ENCODE measurements at regions of chr6 and their contacts with region 1.

Region 1: GRCh38 chr6:160766989-160767660 is 65.1 kb downstream of the PLG start:
- DNase-seq: peak; percentile 77
- H3K4me3 ChIP-seq: peak overlapping the region; percentile 59
- H3K27ac ChIP-seq: no peak overlapping the region
- H3K4me1 ChIP-seq: peaks cover 21% of the 10 kb centered on the region
- CTCF ChIP-seq: peak; percentile 82

Region 2: DNA sequence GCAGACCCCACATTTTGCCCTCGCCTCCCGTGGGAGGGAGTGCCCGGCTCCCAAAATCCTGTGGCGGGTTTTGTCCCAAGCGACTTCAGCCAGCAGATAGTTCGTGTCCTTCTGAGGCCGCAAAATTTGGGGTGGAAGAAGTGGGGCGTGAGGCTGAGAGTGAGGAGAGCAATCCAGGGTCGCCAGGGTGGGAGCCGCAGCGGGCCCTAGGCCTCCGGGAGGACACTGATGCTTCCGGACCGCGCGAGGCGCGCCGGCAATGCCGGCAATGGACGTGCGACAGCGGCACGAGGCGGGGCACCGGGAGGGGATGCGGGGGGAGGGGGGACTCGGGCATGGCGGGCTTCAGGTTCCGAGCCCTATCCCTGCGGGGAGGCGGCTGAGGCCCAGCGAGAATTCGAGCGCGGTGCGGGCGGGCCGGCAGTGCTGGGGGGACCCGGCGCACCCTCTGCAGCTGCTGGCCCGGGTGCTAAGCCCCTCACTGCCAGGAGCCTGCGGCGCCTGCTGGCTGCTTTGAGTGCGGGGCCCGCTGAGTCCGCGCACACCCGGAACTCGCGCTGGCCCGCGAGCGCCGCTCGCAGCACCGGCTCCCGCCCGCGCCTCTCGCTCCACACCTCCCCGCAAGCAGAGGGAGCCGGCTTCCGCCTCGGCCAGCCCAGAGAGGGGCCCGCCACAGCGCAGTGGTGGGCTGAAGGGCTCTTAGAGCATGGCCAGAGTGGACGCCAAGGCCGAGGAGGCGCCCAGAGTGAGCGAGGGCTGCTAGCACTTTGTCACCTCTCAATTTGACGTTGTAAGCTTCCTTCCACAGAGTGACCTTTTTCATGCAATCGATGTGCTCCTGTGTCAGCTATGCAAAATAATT is 246.9 kb before region 1 on chr6:
- CTCF ChIA-PET with region 1: no interaction called
- POLR2A ChIA-PET with region 1: no interaction called
- intact Hi-C with region 1: loop called (anchors 5 kb)
- DNase-seq: peak; percentile 30
- H3K4me3 ChIP-seq: no peak overlapping the region
- H3K27ac ChIP-seq: no peak overlapping the region
- H3K4me1 ChIP-seq: no peaks in the 10 kb centered on the region
- CTCF ChIP-seq: peak; percentile 57

Region 3: DNA sequence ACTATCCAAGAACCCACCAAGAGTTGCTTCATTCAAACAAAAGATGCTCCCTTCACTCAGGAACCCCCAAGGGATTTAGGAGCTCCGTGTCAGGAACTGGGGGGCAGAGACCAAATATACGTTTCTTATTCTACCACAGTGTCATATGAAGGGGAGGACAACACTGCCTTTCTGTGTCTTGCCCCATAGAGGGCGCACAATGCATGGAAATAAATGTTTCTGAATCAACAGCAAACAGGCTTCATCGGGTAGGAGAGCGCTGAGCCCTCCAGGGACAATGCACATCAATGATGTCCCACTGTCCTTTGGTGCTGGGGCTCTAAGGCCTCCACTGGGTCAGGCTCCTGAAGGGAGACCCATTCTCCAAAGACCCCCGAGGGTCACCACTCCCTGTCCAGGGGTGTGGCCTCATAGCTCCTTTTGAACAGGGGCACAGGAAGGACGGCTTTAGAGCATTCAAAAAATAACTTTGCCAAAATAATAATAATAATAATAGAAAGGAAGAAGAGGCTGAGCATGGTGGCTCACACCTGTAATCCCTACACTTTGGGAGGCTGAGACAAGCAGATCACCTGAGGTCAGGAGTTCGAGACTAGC is 34.0 kb before region 1 on chr6:
- CTCF ChIA-PET with region 1: interaction called, 3 read pairs
- POLR2A ChIA-PET with region 1: interaction called, 3 read pairs
- intact Hi-C with region 1: loop called (anchors 1 kb)
- DNase-seq: peak; percentile 86
- H3K4me3 ChIP-seq: no peak overlapping the region
- H3K27ac ChIP-seq: no peak overlapping the region
- H3K4me1 ChIP-seq: peaks cover 13% of the 10 kb centered on the region
- CTCF ChIP-seq: peak; percentile 88

Region 4: DNA sequence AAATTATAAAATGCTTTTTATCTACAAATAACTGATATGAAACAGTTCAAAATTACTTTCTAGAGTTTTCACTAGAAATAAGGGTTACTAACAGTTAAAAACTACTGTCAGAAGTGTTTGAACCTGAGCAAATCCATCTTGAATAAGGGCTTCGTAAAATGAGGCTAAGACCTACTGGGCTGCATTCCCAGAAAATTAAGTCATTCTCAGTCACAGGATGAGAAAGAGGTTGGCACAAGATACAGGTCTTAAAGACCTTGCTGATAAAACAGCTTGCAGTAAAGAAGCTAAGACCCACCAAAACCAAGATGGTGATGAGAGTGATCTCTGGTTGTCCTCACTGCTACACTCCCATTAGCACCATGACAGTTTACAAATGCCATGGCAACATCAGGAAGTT is 28.6 kb after region 1 on chr6:
- CTCF ChIA-PET with region 1: no interaction called
- POLR2A ChIA-PET with region 1: no interaction called
- intact Hi-C with region 1: no loop called
- DNase-seq: no peak
- H3K4me3 ChIP-seq: no peak overlapping the region
- H3K27ac ChIP-seq: no peak overlapping the region
- H3K4me1 ChIP-seq: no peaks in the 10 kb centered on the region
- CTCF ChIP-seq: no peak